OCI-LY7 (cell line): ENCODE measurements at regions of chr2 and their contacts with region 1.

Region 1: DNA sequence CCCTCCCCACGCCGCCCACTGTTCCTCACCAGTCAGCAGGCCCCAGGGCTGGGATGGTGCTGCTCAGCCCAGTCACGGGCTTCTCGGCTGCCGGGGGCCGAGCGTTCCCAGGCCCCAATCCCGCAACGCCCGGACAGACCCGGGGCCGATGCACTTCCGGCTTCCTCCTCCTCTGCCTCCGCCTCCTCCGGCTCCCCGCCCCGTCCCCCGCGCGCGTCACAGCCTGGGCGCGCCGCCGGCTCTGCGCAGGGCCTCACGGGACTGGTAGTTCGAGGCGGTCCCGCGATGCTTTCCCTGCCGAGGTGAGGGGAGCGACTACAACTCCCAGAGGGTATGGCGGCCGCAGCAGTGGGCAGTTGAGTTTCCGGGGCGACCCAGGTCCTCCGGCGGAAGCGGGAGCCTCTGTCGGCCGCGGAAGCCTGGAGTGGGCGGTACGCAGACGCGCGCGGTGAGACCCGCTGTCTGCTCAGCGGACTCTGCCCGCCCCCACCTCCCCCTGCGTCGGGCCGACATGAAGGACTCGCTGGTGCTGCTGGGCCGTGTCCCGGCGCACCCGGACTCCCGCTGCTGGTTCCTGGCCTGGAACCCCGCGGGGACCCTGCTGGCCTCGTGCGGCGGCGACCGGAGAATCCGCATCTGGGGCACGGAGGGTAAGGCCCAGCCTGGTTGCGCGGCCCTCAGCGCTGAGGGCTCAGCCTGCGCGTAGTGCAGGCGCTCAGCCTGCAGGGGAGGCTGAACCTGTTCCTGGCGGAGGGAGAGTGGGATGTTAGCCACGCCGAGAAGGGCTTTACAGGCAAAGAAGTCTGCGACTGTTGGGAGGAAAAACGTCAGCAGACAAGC is at the starts of genes CIAO1 and TMEM127:
- DNase-seq: peak; percentile 98
- H3K4me3 ChIP-seq: peak within 1 kb of the TSS; percentile 79
- H3K27ac ChIP-seq: peak within 1 kb of the TSS; percentile 62
- H3K4me1 ChIP-seq: peaks cover 23% of the 10 kb centered on the region
- CTCF ChIP-seq: peak; percentile 58
- total RNA-seq, gene CIAO1: 89.8 and 128 TPM in 2 replicates
- total RNA-seq, gene TMEM127: 12.0 and 12.1 TPM in 2 replicates

Region 2: DNA sequence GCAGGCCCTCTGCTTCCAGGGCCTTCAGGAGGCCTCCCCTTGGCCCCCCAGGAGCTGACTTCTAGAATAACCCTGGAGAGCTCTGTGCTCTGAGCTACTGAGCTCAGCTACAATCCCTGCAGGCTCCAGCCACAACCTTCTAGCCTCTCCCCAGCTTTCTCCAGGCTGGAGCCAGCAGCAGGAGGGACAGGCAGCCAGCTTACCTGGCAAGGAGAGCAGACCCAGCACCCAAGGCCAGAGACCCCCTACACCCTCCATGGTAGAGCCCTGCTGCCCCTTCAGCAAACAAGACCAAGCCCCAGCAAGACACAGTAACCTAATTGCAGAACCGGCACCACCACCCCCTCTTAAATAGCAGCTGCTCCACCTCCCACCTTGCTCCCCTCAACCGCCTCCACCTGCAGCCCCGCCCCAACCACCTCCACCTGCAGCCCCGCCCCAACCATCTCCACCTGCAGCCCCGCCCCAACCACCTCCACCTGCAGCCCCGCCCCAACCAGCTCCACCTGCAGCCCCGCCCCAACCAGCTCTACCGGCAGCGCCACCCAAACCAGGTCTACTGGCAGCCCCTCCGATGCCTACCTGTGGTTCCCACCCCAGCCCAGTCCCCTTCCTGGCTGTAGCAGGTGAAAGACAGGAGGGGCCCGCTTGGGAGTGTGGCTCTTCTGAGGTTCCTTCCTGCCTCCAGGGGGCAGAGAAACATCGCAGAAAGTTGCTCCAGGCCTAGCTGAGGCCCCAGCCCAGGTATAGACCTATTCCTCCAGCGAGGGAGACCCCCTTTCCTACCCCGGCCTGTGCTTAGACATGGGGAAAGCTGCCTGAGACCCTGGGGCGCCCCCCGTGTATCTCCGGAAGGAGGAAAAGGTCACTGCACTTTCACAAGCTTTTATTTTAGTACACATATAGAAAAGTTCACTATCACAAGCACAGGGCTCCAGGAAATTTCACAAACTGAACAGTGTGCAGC is 127.6 kb before region 1 on chr2 and contains the start of gene ASTL:
- CTCF ChIA-PET with region 1: interaction called, 5 read pairs
- POLR2A ChIA-PET with region 1: no interaction called
- intact Hi-C with region 1: loop called (anchors 1 kb)
- DNase-seq: peak; percentile 81
- H3K4me3 ChIP-seq: no peak within 1 kb of the TSS
- H3K27ac ChIP-seq: no peak within 1 kb of the TSS
- H3K4me1 ChIP-seq: peaks cover 24% of the 10 kb centered on the region
- CTCF ChIP-seq: peak; percentile 88
- total RNA-seq, gene ASTL: 0.46 TPM in 1 of 2 replicates, not detected in the other

Region 3: DNA sequence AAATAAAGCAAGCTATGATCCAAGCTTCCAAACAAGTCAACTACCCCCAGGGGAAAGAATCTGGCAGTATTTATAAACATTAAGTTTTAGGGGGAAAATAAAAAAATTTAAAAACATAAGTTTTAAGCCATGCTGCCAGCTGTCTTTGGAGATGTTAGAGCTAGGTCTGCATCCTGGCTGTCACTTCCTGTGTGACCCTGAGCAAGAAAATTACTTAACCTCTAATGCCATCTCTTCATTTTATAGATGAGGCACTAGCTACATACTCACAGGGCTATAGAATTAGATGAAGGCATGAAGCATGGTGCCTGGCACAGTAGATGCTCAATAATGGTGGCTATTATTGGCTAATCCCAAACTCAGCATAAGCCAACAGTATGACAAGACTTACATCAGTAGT is 85.5 kb before region 1 on chr2:
- CTCF ChIA-PET with region 1: no interaction called
- POLR2A ChIA-PET with region 1: interaction called, 3 read pairs
- intact Hi-C with region 1: loop called (anchors 5 kb)
- DNase-seq: peak; percentile 25
- H3K4me3 ChIP-seq: no peak overlapping the region
- H3K27ac ChIP-seq: no peak overlapping the region
- H3K4me1 ChIP-seq: peaks cover 10% of the 10 kb centered on the region
- CTCF ChIP-seq: no peak

Region 4: GRCh38 chr2:96241900-96242611 is 24.0 kb before region 1 on chr2:
- CTCF ChIA-PET with region 1: interaction called, 3 read pairs
- POLR2A ChIA-PET with region 1: interaction called, 5 read pairs
- intact Hi-C with region 1: loop called (anchors 1 kb)
- DNase-seq: peak; percentile 79
- H3K4me3 ChIP-seq: peak overlapping the region; percentile 58
- H3K27ac ChIP-seq: peak overlapping the region; percentile 89
- H3K4me1 ChIP-seq: peaks cover 64% of the 10 kb centered on the region
- CTCF ChIP-seq: no peak

Region 5: GRCh38 chr2:96509114-96509846 is 243.2 kb after region 1 on chr2:
- CTCF ChIA-PET with region 1: interaction called, 4 read pairs
- POLR2A ChIA-PET with region 1: no interaction called
- intact Hi-C with region 1: loop called (anchors 10 kb)
- DNase-seq: peak; percentile 73
- H3K4me3 ChIP-seq: no peak overlapping the region
- H3K27ac ChIP-seq: no peak overlapping the region
- H3K4me1 ChIP-seq: no peaks in the 10 kb centered on the region
- CTCF ChIP-seq: peak; percentile 84